ENCODE measurements at regions of chr19 and their contacts with region 1.

Region 1: DNA sequence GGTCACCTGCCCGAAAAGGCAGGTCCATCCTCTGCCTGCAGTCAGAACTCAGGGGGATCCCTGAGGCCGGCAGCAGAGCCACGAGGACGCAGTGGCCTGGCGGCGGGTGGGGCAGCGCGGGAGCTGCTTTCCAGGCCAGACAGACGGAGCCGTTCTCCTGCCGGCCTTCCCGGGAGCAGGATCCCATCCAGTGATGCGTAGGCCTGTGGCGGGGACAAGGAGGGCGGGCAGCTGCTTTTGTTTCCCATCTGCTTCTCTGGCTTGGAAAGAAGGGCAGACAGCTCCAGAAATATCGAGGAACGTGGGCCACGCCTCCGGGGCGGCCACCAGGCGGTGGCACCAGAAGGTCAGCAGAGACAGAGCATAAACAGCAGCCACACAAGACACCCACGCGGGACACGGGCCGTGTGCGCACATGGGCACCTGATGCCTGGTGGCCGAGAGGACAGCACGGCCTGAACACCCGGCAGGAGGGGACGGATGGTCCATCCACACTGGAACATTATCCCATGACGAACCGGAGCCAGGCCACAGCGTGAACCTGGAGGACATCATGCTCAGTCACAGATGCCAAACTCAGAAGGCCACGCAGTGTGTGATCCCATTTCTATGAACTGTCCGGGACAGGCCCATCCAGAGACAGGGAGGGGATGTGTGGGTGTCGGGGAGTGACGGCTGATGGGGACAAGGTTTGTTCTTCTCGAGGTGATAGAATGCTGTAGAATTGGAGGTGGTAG is 13.9 kb upstream of the MKNK2 start:
- DNase-seq: no peak
- H3K4me3 ChIP-seq: no peak overlapping the region
- H3K27ac ChIP-seq: peak overlapping the region; percentile 77 to 85 (median 82)
- H3K4me1 ChIP-seq: peaks cover 15 to 75% (median 45%) of the 10 kb centered on the region in 4 donors
- H3K27me3 ChIP-seq: no peaks in the 10 kb centered on the region
- CTCF ChIP-seq: peak in 3 of 5 experiments; percentile 7 to 25 (median 19)
- EP300 ChIP-seq: peak; percentile 96
- POLR2A ChIP-seq: peak; percentile 10

Region 2: DNA sequence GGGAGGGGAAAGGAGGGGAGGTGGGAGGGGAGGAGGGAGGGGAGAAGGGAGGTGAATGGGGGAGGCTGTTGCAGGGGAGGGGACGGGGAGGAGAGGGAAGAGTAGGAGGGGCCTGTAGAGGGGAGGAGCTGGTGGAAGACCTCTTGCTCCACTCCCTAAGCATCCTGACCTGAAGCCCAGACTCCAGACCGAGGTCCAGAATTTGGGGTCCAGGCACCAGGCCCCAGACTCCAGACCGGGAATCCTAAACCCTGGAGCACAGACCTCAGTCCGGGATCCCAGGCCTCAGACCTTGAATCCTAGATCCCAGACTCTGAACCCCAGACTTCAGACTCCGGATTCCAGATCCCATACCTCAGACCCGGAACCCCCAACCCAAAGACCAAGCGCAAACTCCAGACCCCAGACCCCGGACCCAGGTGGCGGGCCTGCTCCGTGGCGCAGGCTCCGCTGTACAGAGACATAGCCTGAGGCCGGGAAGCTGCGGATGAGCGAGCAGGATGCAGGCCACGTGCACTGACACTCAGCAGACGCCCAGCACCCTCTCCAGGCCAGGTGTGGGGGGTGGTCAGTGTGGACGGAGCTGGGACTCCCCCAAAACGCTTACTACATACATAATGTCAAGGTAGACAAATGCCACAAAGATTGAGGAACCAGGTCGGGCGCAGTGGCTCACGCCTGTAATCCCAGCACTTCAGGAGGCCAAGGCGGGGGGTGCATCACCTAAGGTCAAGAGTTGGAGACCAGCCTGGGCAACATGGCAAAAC is 48.7 kb before region 1 on chr19:
- in situ Hi-C with region 1: loop called in 3 of 4 experiments (anchors 5 to 10 kb)
- intact Hi-C with region 1: loop called (anchors 5 kb)
- DNase-seq: peak; percentile 84
- H3K4me3 ChIP-seq: peak overlapping the region in 1 of 4 donors; percentile 71
- H3K27ac ChIP-seq: peak overlapping the region; percentile 64 to 87 (median 78)
- H3K4me1 ChIP-seq: peaks cover 14 to 29% (median 22%) of the 10 kb centered on the region in 4 donors
- H3K27me3 ChIP-seq: no peaks in the 10 kb centered on the region
- CTCF ChIP-seq: no peak
- EP300 ChIP-seq: no peak
- POLR2A ChIP-seq: no peak

Region 3: DNA sequence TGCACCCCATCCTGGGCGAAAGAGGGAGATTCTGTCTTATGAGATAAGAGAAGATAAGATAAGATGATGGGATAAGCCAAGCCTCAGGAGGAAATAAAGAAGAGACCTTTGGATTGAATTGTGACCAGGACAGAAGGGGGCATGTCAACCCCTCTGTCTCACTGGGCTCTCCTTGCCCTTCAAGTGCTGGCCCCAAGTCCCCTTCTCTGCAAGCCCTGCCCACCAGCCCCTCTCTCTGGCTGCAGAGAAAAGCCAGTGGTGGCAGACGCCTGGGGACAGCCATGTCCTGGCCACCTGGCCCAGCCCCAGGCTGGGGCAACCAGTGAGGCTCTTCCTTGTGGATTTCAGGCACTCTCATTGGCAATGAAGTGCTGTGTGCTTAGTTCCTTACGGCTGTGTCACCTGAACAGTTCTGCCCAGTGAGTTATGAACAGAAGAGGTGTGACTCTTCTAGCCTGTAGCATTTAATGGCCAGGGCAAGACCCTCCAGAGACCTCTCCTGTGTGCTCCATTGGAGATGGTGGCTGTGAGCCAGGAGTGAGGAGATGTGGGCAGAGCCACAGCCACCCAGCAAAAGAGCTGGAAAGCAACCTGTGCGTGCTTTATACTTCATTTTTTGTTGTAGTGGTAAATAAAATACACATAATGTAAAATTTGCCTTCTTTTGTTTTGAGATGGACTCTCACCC is 43.4 kb before region 1 on chr19:
- in situ Hi-C with region 1: loop called in 3 of 4 experiments (anchors 5 to 10 kb)
- intact Hi-C with region 1: loop called (anchors 5 kb)
- DNase-seq: no peak
- H3K4me3 ChIP-seq: no peak overlapping the region
- H3K27ac ChIP-seq: peak overlapping the region in 1 of 4 donors; percentile 2
- H3K4me1 ChIP-seq: peaks cover 0 to 10% (median 6%) of the 10 kb centered on the region in 4 donors
- H3K27me3 ChIP-seq: no peaks in the 10 kb centered on the region
- CTCF ChIP-seq: no peak
- EP300 ChIP-seq: no peak
- POLR2A ChIP-seq: no peak

Region 4: DNA sequence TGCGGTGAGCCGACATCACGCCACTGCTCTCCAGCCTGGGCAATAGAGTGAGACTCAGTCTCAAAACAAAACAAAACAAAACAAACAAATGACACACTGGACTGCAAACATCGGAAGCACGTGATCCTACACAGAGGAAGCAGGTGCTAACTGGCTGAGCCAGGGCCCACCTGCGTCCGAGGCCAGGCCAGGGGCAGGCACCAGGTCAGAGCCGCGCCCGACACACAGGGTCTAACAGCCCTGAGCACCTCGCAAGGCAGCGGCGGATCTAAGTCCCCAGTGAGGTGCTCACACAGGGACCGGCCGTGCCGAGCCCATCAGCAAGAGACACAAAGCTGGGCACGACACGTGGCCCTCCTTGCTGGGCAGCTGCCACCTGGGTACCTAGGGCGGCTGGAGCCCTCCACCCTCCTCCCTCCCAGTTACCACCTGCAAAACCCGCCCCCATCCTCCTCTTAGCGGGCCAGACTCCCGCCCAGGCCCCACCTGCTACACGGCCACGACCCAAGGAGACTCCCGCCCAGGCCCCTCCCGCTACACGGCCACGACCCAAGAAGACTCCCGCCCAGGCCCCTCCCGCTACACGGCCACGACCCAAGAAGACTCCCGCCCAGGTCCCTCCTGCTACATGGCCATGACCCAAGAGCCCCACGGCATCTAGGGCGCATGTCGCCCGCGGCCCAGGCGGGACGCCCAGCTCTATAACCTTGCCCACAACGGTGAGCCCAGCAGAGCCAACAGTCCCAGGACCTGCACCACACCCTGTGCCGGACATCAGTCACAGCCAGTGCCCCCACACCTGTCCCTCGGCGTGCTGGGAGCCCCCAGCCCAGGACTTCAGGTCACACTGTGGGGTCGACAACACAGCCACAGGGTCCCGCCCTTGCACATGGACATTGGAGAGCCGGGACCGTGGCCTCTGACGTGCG is 70.8 kb after region 1 on chr19:
- in situ Hi-C with region 1: no loop called
- intact Hi-C with region 1: no loop called
- DNase-seq: no peak
- H3K4me3 ChIP-seq: no peak overlapping the region
- H3K27ac ChIP-seq: no peak overlapping the region
- H3K4me1 ChIP-seq: no peaks in the 10 kb centered on the region
- H3K27me3 ChIP-seq: no peaks in the 10 kb centered on the region
- CTCF ChIP-seq: no peak
- EP300 ChIP-seq: no peak
- POLR2A ChIP-seq: no peak